ENCODE measurements at regions of chr2 and their contacts with region 1.

Region 1: GRCh38 chr2:152036611-152037469 is 62.0 kb downstream of the CACNB4 start:
- DNase-seq: peak in 1 of 2 donors; percentile 82
- H3K4me3 ChIP-seq: no peak overlapping the region
- H3K27ac ChIP-seq: no peak overlapping the region
- H3K4me1 ChIP-seq: peaks cover 0 to 3% of the 10 kb centered on the region in 2 donors
- H3K27me3 ChIP-seq: no peaks in the 10 kb centered on the region
- CTCF ChIP-seq: peak; percentile 60 to 88 (median 73)

Region 2: DNA sequence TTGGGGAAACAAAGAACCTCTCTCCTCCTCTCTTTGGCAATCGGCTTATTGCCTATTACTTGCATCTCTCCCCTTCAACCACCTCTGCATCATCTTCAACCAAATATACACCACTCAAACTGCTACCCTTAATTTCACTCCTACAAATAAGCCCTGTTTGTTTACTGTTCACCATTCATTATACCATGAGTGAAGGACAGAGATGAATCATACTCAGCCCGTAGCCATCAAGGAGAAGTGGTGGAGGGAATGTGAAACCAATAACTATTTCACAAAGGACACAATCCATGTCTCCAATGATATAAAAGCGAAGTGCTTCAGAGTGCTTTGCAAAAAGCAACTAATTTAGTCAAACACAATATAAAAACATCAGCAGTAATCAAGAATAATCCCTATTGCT is 14.8 kb before region 1 on chr2:
- intact Hi-C with region 1: no loop called
- DNase-seq: no peak
- H3K4me3 ChIP-seq: no peak overlapping the region
- H3K27ac ChIP-seq: no peak overlapping the region
- H3K4me1 ChIP-seq: no peaks in the 10 kb centered on the region
- H3K27me3 ChIP-seq: no peaks in the 10 kb centered on the region
- CTCF ChIP-seq: no peak

Region 3: DNA sequence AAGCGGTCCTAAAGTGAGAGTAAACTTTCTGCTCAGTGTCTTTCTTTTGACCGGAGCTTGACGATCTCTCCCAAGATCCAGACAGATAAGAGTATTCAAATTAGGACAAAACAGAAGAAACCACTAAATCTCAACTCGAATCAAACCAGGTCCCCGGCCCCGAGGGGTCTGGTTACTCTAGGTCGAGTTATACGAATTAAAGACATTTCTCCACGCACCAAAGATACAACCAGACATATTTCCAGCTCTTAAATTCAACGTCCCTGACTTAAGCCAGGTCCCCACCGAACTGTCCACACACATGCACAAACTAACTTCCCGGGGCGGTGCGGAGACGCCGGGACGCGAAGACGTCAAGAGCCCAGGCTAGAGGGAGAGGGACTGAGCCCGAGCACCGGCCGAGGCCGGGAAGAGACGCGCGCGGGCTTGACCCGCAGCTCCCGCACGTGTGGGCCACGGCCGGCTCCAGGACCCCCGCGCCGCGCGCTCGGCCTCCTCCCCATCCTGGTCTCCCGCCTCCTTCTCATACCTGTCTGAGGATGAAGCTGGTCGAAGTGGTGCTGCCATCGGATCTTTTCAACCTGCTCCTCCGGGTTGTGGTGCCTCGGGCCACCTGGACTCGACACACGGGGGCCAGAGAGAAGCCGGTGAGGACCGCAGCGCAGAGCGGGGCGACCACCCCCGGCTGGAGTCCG is 61.1 kb after region 1 on chr2:
- intact Hi-C with region 1: loop called (anchors 2 kb)
- DNase-seq: no peak
- H3K4me3 ChIP-seq: peak overlapping the region; percentile 63 to 83
- H3K27ac ChIP-seq: peak overlapping the region; percentile 34 to 61
- H3K4me1 ChIP-seq: peaks cover 3 to 7% of the 10 kb centered on the region in 2 donors
- H3K27me3 ChIP-seq: no peaks in the 10 kb centered on the region
- CTCF ChIP-seq: no peak

Region 4: DNA sequence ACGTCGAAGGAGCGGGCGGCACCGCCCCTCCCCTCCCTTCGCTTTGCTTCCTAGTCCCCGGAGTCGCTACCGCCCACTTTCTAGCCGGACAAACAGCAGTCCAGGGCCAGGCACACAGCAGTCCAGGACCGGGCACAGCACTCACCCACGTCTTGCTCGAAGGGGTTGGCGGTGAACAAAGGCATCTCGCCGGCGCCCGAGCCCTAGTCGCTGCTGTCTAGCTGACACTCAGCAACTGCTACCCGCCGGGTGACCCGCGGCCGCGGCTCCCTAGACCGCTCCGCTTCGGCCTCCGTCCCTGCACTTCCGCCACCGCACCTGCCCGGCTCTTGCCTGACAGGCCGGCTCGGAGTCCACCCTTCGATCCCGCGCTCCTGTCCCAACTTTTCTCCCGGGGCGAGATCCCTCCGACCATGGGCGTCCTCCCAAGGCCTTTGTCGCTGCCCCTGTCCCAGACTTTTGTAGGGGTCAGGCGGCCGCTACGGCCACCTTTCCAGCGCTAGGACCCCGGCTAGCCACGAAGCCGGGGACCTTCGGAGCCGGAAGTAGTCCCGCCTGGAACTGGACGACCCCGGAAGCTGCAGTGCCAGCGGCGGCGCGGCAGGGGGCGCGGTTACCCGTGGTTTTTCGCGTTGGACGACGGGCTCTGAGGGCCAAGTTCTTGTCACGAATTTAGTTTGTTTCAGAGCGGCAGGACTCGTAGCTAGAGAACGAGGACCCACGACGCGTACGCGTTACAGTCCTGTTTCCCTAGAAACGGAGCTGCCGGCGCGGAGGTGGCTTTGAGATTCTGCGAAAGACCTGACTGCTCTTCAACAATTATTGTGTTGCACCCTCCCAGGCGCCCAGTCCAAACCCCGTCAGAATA is 138.9 kb after region 1 on chr2 and contains the start of gene STAM2:
- intact Hi-C with region 1: loop called (anchors 2 kb)
- DNase-seq: peak; percentile 64 to 96
- H3K4me3 ChIP-seq: peak within 1 kb of the TSS; percentile 75 to 99
- H3K27ac ChIP-seq: peak within 1 kb of the TSS; percentile 92 to 99
- H3K4me1 ChIP-seq: peaks cover 3 to 15% of the 10 kb centered on the region in 2 donors
- H3K27me3 ChIP-seq: no peaks in the 10 kb centered on the region
- CTCF ChIP-seq: peak; percentile 93 to 98 (median 94)
- total RNA-seq, gene STAM2: 4.0 TPM

Region 5: GRCh38 chr2:152627351-152627957 is 590.6 kb after region 1 on chr2:
- intact Hi-C with region 1: loop called (anchors 5 kb)
- DNase-seq: no peak
- H3K4me3 ChIP-seq: no peak overlapping the region
- H3K27ac ChIP-seq: peak overlapping the region in 1 of 2 donors; percentile 5
- H3K4me1 ChIP-seq: peaks cover 0 to under 1% of the 10 kb centered on the region in 2 donors
- H3K27me3 ChIP-seq: no peaks in the 10 kb centered on the region
- CTCF ChIP-seq: peak; percentile 47 to 76 (median 57)

Region 6: DNA sequence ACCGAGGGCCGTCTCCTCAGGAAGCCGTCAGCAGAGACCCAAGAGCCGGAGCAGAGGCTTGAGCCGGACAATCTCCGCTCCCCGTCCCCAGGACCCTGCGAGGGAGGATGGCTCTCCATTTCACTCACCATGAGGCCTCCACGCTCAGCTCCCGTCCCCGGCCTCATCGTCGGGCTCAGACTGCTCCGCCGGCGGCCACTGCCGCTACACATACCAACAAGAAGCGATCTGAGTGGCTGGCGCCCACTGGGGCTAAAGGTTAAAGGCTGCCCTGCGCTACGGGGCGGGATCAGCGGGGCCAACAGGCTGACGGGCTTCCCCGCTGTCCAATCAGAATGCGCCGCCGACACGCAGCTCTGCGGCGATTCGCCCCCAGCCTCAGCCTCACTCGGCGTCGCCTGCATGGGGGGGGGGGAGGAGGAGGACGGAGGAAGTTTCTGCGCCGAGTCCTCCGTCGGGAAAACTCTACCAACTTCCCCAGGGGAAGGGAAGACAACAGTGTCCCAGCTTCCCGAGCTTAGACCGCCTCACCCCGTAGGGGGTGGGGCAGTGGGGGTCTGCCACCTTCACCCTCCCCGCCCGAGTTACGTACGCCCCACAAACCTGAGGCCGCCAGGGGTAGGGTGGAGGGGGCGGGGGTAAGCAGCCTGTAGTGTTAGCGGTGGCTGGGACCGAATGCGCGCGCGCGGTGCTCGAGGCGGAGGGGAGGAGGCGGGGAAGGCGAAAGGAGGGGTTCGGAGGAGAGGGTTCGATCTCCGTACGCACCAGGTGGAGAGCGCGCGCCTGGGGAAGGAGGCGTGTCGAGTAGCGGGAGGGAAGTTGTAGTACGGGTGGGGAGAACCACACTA is 680.6 kb after region 1 on chr2 and contains the start of gene PRPF40A:
- intact Hi-C with region 1: loop called (anchors 10 kb)
- DNase-seq: peak; percentile 95 to 99
- H3K4me3 ChIP-seq: peak within 1 kb of the TSS; percentile 83 to 96
- H3K27ac ChIP-seq: peak within 1 kb of the TSS; percentile 93 to 98
- H3K4me1 ChIP-seq: peaks cover 0 to 32% of the 10 kb centered on the region in 2 donors
- H3K27me3 ChIP-seq: no peaks in the 10 kb centered on the region
- CTCF ChIP-seq: no peak
- total RNA-seq, gene PRPF40A: 28.9 TPM

Measured in ascending aorta (tissue), 2 donors.